CD14-positive monocyte (primary cell): ENCODE measurements at regions of chr3 and their contacts with region 1.

Region 1: DNA sequence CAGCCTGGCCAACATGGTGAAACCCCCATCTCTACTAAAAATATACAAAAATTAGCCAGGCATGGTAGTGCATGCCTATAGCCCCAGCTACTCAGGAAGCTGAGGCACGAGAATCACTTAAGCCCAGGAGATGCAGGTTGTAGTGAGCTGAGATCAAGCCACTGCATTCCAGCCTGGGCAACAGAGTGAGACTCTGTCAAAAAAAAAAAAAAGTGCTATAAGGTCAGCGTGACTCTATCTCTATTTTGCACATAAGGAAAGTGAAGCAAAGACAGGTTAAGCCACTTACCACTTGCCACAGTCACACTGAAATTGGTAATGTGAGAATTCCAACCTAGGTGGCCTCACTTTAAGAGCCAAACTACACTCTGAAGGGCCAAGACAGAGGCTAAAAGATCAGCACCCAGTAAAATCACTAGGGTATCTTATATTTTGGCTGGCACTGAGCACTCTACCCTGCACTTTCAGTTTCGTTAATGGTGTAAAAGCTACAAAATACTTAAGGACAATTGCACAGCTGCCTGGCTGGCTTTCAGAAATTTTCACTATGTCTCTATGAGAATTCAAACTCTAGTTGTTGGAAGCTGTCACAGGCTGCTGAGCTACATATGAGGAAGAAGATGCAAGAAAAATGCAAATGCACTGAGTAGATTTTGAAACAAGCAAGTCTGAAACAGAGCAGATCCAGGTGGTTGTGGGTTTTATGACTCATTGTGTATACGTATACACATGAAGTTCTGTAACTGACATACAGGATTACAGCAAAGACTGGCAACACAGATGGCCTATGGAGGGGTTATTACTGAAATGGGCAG is 32.7 kb downstream of the TRANK1 start:
- DNase-seq: peak; percentile 84 to 94 (median 92)
- H3K4me3 ChIP-seq: peak overlapping the region in 1 of 3 experiments; percentile 44
- H3K4me3 Mint-ChIP-seq: no peak overlapping the region
- H3K27ac ChIP-seq: peak overlapping the region; percentile 49 to 83
- H3K27ac Mint-ChIP-seq: peak overlapping the region; percentile 89 to 94 (median 91)
- H3K4me1 ChIP-seq: peaks cover 44 to 49% of the 10 kb centered on the region in 2 donors
- H3K4me1 Mint-ChIP-seq: peaks cover 41% of the 10 kb centered on the region
- H3K27me3 ChIP-seq: no peaks in the 10 kb centered on the region
- H3K27me3 Mint-ChIP-seq: no peaks in the 10 kb centered on the region
- CTCF ChIP-seq: no peak

Region 2: GRCh38 chr3:36895496-36896409 is 16.4 kb before region 1 on chr3:
- intact Hi-C with region 1: loop called in 1 of 2 experiments (anchors 2 kb)
- DNase-seq: peak; percentile 28 to 75 (median 61)
- H3K4me3 ChIP-seq: peak overlapping the region in 1 of 3 experiments; percentile 46
- H3K4me3 Mint-ChIP-seq: no peak overlapping the region
- H3K27ac ChIP-seq: peak overlapping the region in 1 of 2 donors; percentile 80
- H3K27ac Mint-ChIP-seq: peak overlapping the region; percentile 87 to 95 (median 94)
- H3K4me1 ChIP-seq: peaks cover 47% of the 10 kb centered on the region in 2 donors
- H3K4me1 Mint-ChIP-seq: peaks cover 51% of the 10 kb centered on the region
- H3K27me3 ChIP-seq: no peaks in the 10 kb centered on the region
- H3K27me3 Mint-ChIP-seq: peaks cover 0 to 2% (median 1%) of the 10 kb centered on the region in 3 donors
- CTCF ChIP-seq: no peak

Region 3: GRCh38 chr3:36944641-36945270 is 32.6 kb after region 1 on chr3 and contains the start of gene TRANK1:
- intact Hi-C with region 1: loop called in 1 of 2 experiments (anchors 5 kb)
- DNase-seq: peak; percentile 47 to 79 (median 71)
- H3K4me3 ChIP-seq: peak within 1 kb of the TSS; percentile 51 to 82 (median 67)
- H3K4me3 Mint-ChIP-seq: peak within 1 kb of the TSS; percentile 91 to 98
- H3K27ac ChIP-seq: peak within 1 kb of the TSS in 1 of 2 donors; percentile 76
- H3K27ac Mint-ChIP-seq: peak within 1 kb of the TSS in 6 of 7 donors; percentile 72 to 83 (median 78)
- H3K4me1 ChIP-seq: peaks cover 11 to 14% of the 10 kb centered on the region in 2 donors
- H3K4me1 Mint-ChIP-seq: peaks cover 19% of the 10 kb centered on the region
- H3K27me3 ChIP-seq: no peaks in the 10 kb centered on the region
- H3K27me3 Mint-ChIP-seq: peaks cover 4 to 6% (median 4%) of the 10 kb centered on the region in 3 donors
- CTCF ChIP-seq: no peak
- polyA plus RNA-seq, gene TRANK1: 2.8 to 6.3 (median 5.8) TPM

Region 4: GRCh38 chr3:36993326-36994283 is 81.4 kb after region 1 on chr3 and contains the start of gene MLH1:
- intact Hi-C with region 1: loop called (anchors 5 kb)
- DNase-seq: peak; percentile 100
- H3K4me3 ChIP-seq: peak within 1 kb of the TSS; percentile 56 to 89 (median 87)
- H3K4me3 Mint-ChIP-seq: no peak within 1 kb of the TSS
- H3K27ac ChIP-seq: peak within 1 kb of the TSS; percentile 98 to 99
- H3K27ac Mint-ChIP-seq: no peak within 1 kb of the TSS
- H3K4me1 ChIP-seq: peaks cover 39 to 52% of the 10 kb centered on the region in 2 donors
- H3K4me1 Mint-ChIP-seq: peaks cover 33% of the 10 kb centered on the region
- H3K27me3 ChIP-seq: no peaks in the 10 kb centered on the region
- H3K27me3 Mint-ChIP-seq: no peaks in the 10 kb centered on the region
- CTCF ChIP-seq: no peak
- polyA plus RNA-seq, gene MLH1: 13.7 to 19.7 (median 18.5) TPM

Region 5: DNA sequence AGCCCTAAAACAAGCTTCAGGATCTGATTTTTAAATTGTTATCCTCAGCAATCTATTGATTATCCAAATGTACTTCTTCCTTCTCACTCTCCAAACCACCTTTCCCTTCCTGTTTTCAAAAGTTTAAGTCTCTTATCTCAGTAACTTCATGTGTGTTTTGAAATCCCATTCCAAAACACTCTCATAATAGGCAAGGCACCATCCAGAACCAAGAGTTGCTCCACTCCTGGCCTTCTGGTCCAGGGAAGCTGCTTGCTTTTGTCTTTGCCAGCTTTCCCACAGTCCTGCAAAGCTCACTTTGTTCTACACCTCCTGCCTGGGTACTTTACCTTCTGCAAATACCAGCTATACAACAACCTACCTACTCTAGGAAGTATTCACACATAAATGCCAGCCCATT is 144.6 kb after region 1 on chr3:
- intact Hi-C with region 1: no loop called
- DNase-seq: no peak
- H3K4me3 ChIP-seq: no peak overlapping the region
- H3K4me3 Mint-ChIP-seq: no peak overlapping the region
- H3K27ac ChIP-seq: peak overlapping the region in 1 of 2 donors; percentile 22
- H3K27ac Mint-ChIP-seq: peak overlapping the region in 4 of 7 donors; percentile 9 to 67 (median 21)
- H3K4me1 ChIP-seq: peaks cover 2 to 4% of the 10 kb centered on the region in 2 donors
- H3K4me1 Mint-ChIP-seq: peaks cover 7% of the 10 kb centered on the region
- H3K27me3 ChIP-seq: no peaks in the 10 kb centered on the region
- H3K27me3 Mint-ChIP-seq: no peaks in the 10 kb centered on the region
- CTCF ChIP-seq: no peak

Region 6: GRCh38 chr3:37229740-37230139 is 317.5 kb after region 1 on chr3:
- intact Hi-C with region 1: loop called in 1 of 2 experiments (anchors 10 kb)
- DNase-seq: no peak
- H3K4me3 ChIP-seq: no peak overlapping the region
- H3K4me3 Mint-ChIP-seq: no peak overlapping the region
- H3K27ac ChIP-seq: no peak overlapping the region
- H3K27ac Mint-ChIP-seq: no peak overlapping the region
- H3K4me1 ChIP-seq: no peaks in the 10 kb centered on the region
- H3K4me1 Mint-ChIP-seq: no peaks in the 10 kb centered on the region
- H3K27me3 ChIP-seq: no peaks in the 10 kb centered on the region
- H3K27me3 Mint-ChIP-seq: peaks cover 0 to 2% (median 2%) of the 10 kb centered on the region in 3 donors
- CTCF ChIP-seq: no peak